Calu3 (cell line): ENCODE measurements at regions of chr10 and their contacts with region 1.

Region 1: GRCh38 chr10:90751107-90751997 is 106.5 kb downstream of the HTR7 start:
- DNase-seq: peak; percentile 46
- H3K4me3 Mint-ChIP-seq: no peak overlapping the region
- H3K27ac Mint-ChIP-seq: no peak overlapping the region
- H3K4me1 Mint-ChIP-seq: no peaks in the 10 kb centered on the region
- H3K27me3 Mint-ChIP-seq: peaks cover 56% of the 10 kb centered on the region
- CTCF ChIP-seq: peak; percentile 56

Region 2: DNA sequence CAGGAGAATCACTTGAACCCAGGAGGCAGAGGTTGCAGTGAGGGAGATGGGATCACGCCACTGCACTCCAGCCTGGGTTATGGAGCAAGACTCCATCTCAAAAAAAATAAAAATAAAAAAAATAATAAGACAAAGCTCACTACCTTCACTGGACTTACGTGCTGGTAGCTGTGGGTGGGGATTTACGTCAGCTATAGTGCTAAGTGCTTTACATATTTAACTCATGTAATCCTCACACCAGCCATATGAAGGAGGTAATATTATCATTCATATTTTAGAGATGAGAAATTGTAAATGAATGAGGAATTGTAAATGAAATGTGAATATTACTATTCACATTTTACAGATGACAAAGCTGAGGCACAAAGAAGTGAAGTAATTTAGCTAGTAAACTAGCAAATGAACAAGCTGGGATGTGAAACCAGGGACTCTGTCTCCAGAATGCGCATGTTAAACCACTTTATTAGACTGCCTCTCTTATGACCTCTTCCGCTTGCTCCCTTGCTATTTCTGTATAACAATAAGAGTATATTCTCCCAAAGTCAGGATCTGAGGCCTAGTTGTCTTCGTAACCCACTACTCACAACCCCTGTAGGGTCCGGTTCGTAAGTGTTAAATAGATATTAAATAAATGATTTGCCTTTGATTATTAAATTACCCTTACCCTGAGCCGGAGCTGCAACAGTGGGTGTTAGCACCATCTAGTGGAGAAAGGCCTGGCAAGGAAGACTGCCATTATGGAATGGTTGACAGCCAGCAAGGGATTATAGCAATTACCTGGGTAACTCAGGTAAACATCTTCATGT is 36.2 kb after region 1 on chr10:
- CTCF ChIA-PET with region 1: no interaction called
- intact Hi-C with region 1: loop called (anchors 1 kb)
- DNase-seq: peak; percentile 53
- H3K4me3 Mint-ChIP-seq: no peak overlapping the region
- H3K27ac Mint-ChIP-seq: no peak overlapping the region
- H3K4me1 Mint-ChIP-seq: no peaks in the 10 kb centered on the region
- H3K27me3 Mint-ChIP-seq: peaks cover 78% of the 10 kb centered on the region
- CTCF ChIP-seq: peak; percentile 43

Region 3: GRCh38 chr10:90862908-90863514 is 111.7 kb after region 1 on chr10:
- CTCF ChIA-PET with region 1: no interaction called
- intact Hi-C with region 1: loop called (anchors 1 kb)
- DNase-seq: peak; percentile 9
- H3K4me3 Mint-ChIP-seq: no peak overlapping the region
- H3K27ac Mint-ChIP-seq: no peak overlapping the region
- H3K4me1 Mint-ChIP-seq: no peaks in the 10 kb centered on the region
- H3K27me3 Mint-ChIP-seq: peaks cover 35% of the 10 kb centered on the region
- CTCF ChIP-seq: peak; percentile 41

Region 4: GRCh38 chr10:90871766-90872647 is 120.7 kb after region 1 on chr10 and contains the start of gene RPP30:
- CTCF ChIA-PET with region 1: no interaction called
- intact Hi-C with region 1: loop called (anchors 2 kb)
- DNase-seq: peak; percentile 79
- H3K4me3 Mint-ChIP-seq: peak within 1 kb of the TSS; percentile 80
- H3K27ac Mint-ChIP-seq: peak within 1 kb of the TSS; percentile 56
- H3K4me1 Mint-ChIP-seq: peaks cover 15% of the 10 kb centered on the region
- H3K27me3 Mint-ChIP-seq: peaks cover 33% of the 10 kb centered on the region
- CTCF ChIP-seq: no peak
- total RNA-seq, gene RPP30: 27.3 and 36.6 TPM in 2 replicates